Activated CD8-positive, alpha-beta T cell treated with anti-CD3 and anti-CD28 coated beads, Interleukin-2, amount 10 ng/mL, durations not matched to agents 7 days and 5 days (primary cell): ENCODE measurements at regions of chr2 and their contacts with region 1.

Region 1: DNA sequence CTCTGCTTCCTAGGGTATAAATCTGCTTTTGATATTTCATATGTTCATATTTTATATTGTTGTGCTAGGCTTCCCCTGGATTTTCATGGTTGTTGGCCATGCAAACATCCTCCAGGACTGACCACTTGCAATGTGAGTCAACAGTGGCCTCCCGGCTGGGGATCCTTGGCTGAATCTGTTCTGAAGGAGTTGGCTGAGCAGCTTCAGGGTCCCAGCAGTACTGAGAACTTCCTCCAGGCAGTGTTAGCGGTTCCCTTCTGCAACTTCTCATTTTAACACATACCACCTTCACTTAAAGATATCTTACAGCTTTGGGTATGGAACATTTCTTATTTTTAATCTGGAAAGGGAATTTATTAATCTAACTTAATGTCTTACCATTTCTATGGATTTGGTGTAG is 122.1 kb downstream of the DTNB start:
- DNase-seq: no peak
- ATAC-seq: no peak
- H3K4me3 Mint-ChIP-seq: no peak overlapping the region
- H3K27ac Mint-ChIP-seq: no peak overlapping the region
- H3K4me1 Mint-ChIP-seq: peaks cover 11% of the 10 kb centered on the region
- H3K27me3 Mint-ChIP-seq: no peaks in the 10 kb centered on the region

Region 2: DNA sequence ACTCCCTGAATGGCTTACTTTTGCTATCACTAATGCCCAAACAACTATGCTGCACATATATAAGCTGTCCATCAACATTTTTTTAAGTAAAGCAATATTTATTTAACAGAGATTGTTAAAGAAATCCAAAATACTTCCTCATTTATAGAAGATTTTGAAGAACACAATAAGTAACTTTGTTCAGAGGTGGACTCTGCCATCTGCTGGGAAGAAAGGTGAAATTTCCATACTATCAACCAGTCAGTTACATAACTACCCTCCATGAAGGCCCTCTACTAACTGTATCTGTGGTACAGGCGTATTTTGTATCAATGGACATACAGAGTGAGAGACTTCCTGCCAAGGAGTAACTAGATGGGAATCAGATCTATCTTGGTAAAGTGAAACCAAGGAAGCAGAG is 16.1 kb after region 1 on chr2:
- CTCF ChIA-PET with region 1: interaction called, 14 read pairs
- POLR2A ChIA-PET with region 1: no interaction called
- DNase-seq: peak; percentile 52
- ATAC-seq: peak; percentile 74
- H3K4me3 Mint-ChIP-seq: no peak overlapping the region
- H3K27ac Mint-ChIP-seq: peak overlapping the region; percentile 73
- H3K4me1 Mint-ChIP-seq: peaks cover 19% of the 10 kb centered on the region
- H3K27me3 Mint-ChIP-seq: no peaks in the 10 kb centered on the region